ENCODE measurements at regions of chr5 and their contacts with region 1.

Region 1: GRCh38 chr5:95846554-95847260 is 24.2 kb upstream of the GLRX start:
- DNase-seq: peak in 2 of 3 donors; percentile 45 to 79
- ATAC-seq: peak; percentile 74 to 76
- H3K4me3 ChIP-seq: no peak overlapping the region
- H3K27ac ChIP-seq: peak overlapping the region; percentile 22
- H3K4me1 ChIP-seq: no peaks in the 10 kb centered on the region
- H3K27me3 ChIP-seq: no peaks in the 10 kb centered on the region

Region 2: GRCh38 chr5:95646554-95647431 is 199.9 kb before region 1 on chr5 and contains the start of gene RFESD:
- intact Hi-C with region 1: loop called in 3 of 4 experiments (anchors 5 kb)
- DNase-seq: peak; percentile 99 to 100 (median 100)
- ATAC-seq: peak; percentile 99 to 100
- H3K4me3 ChIP-seq: peak within 1 kb of the TSS; percentile 62
- H3K27ac ChIP-seq: peak within 1 kb of the TSS; percentile 93
- H3K4me1 ChIP-seq: no peaks in the 10 kb centered on the region
- H3K27me3 ChIP-seq: no peaks in the 10 kb centered on the region
- total RNA-seq, gene RFESD: 3.4 to 9.4 (median 4.9) TPM

Region 3: GRCh38 chr5:95669540-95669939 is 177.2 kb before region 1 on chr5:
- intact Hi-C with region 1: loop called in 1 of 4 experiments (anchors 5 kb)
- DNase-seq: peak; percentile 76 to 86 (median 84)
- ATAC-seq: peak; percentile 96
- H3K4me3 ChIP-seq: no peak overlapping the region
- H3K27ac ChIP-seq: peak overlapping the region; percentile 39
- H3K4me1 ChIP-seq: peaks cover 5% of the 10 kb centered on the region
- H3K27me3 ChIP-seq: no peaks in the 10 kb centered on the region

Region 4: GRCh38 chr5:95781101-95781583 is 65.6 kb before region 1 on chr5:
- intact Hi-C with region 1: loop called (anchors 2 to 5 kb)
- DNase-seq: peak; percentile 80 to 92 (median 87)
- ATAC-seq: peak; percentile 93 to 94
- H3K4me3 ChIP-seq: no peak overlapping the region
- H3K27ac ChIP-seq: no peak overlapping the region
- H3K4me1 ChIP-seq: peaks cover 4% of the 10 kb centered on the region
- H3K27me3 ChIP-seq: no peaks in the 10 kb centered on the region

Region 5: DNA sequence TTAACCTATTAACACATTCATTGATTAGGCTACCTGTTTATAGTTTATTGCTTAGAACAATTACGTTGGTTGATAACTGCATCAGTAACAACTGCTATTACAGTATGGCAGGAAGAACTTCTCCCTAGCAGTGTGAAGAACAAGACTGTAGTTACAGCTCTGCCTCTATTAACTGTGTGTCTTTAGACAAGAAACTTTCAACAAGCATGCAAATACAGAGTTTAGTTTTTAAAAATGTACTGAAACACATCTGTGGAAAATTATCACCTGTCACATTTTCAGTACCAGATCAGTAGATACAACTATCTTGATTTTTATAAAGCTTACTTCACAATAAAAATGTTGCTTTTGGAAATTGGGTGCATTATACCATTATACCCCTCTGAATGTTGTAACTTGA is 92.8 kb after region 1 on chr5:
- intact Hi-C with region 1: no loop called
- DNase-seq: no peak
- ATAC-seq: no peak
- H3K4me3 ChIP-seq: no peak overlapping the region
- H3K27ac ChIP-seq: no peak overlapping the region
- H3K4me1 ChIP-seq: peaks cover 3% of the 10 kb centered on the region
- H3K27me3 ChIP-seq: no peaks in the 10 kb centered on the region